ENCODE measurements at regions of chr6 and their contacts with region 1.

Region 1: GRCh38 chr6:32984605-32985389 is 16.4 kb downstream of the BRD2 start:
- DNase-seq: no peak
- H3K4me3 ChIP-seq: no peak overlapping the region
- CTCF ChIP-seq: peak; percentile 82

Region 2: GRCh38 chr6:32838114-32838958 is 146.5 kb before region 1 on chr6 and contains the start of gene TAP2:
- CTCF ChIA-PET with region 1: interaction called, 22 read pairs
- POLR2A ChIA-PET with region 1: no interaction called
- DNase-seq: peak; percentile 47
- H3K4me3 ChIP-seq: peak within 1 kb of the TSS; percentile 96
- CTCF ChIP-seq: peak; percentile 97

Region 3: GRCh38 chr6:32894080-32895005 is 90.5 kb before region 1 on chr6:
- CTCF ChIA-PET with region 1: interaction called, 10 read pairs
- POLR2A ChIA-PET with region 1: interaction called, 5 read pairs
- DNase-seq: peak; percentile 44
- H3K4me3 ChIP-seq: peak overlapping the region; percentile 77
- CTCF ChIP-seq: no peak

Region 4: GRCh38 chr6:32940656-32941213 is 44.1 kb before region 1 on chr6 and contains the start of gene HLA-DMB:
- CTCF ChIA-PET with region 1: interaction called, 337 read pairs
- POLR2A ChIA-PET with region 1: no interaction called
- DNase-seq: peak; percentile 33
- H3K4me3 ChIP-seq: no peak within 1 kb of the TSS
- CTCF ChIP-seq: no peak

Region 5: DNA sequence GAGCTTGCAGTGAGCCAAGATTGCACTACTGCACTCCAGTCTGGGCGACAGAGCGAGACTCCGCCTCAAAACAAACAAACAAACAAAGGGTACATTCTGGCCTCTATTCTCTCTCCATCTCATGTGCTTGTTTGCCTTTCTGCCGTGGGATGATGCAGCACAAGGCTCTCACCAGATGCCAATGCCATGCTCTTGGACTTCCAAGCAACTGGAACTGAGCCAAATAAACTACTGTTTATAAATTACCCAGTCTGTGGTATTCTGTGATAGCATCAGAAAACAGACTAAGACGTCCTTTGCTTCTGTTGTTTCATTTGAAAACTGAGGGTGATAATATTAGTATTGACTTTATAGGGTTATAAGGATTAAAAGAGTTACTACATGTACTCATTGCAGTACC is 20.0 kb before region 1 on chr6:
- CTCF ChIA-PET with region 1: interaction called, 142 read pairs
- POLR2A ChIA-PET with region 1: interaction called, 48 read pairs
- DNase-seq: no peak
- H3K4me3 ChIP-seq: no peak overlapping the region
- CTCF ChIP-seq: no peak

Measured in AG04449 (cell line).